ENCODE measurements at regions of chr9 and their contacts with region 1.

Region 1: GRCh38 chr9:125428060-125428901 is 166.7 kb downstream of the GAPVD1 start:
- DNase-seq: peak in 1 of 2 donors; percentile 36
- ATAC-seq: peak in 7 of 8 donors; percentile 16 to 54 (median 47)
- H3K4me3 ChIP-seq: no peak overlapping the region
- H3K27ac ChIP-seq: no peak overlapping the region
- H3K4me1 ChIP-seq: no peaks in the 10 kb centered on the region
- H3K27me3 ChIP-seq: no peaks in the 10 kb centered on the region
- CTCF ChIP-seq: peak in 8 of 9 donors; percentile 15 to 56 (median 50)

Region 2: DNA sequence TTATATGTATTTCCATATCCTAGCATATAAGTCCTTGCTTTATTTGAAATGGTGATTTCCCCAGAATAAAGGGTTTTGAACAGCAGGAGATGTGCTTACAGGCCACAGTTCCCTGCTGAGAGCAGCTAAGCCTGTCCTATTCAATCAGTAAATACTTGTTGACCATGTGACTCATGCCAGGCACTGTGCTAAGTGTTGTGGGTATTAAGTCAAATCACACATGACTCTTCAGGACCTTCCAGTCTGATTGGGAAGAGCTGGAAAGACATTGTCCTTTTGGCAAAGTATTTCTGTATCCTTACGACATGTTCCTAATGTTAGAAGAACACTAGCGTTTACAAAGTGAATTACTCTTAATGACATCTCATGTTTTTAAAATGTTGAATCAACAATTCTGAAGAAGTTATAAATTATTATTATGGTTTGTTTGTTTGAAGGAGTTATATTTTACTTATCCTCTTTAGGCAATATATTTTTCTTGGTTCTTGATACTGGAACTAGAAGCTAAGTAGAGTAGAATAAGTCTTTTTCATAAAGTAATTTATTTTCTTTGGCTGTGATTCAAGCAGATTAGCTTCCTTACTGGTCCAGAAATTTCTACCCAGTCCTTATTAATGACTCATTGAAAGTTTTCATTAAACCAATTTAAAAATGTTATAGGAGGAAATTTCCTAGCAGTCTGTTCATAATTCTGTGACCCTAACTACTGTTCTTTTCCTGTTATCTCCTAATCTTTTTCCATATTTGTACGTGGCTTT is 84.6 kb before region 1 on chr9:
- intact Hi-C with region 1: no loop called
- DNase-seq: peak in 1 of 2 donors; percentile 9
- ATAC-seq: peak; percentile 53 to 97 (median 77)
- H3K4me3 ChIP-seq: no peak overlapping the region
- H3K27ac ChIP-seq: peak overlapping the region in 5 of 10 donors; percentile 2 to 20 (median 10)
- H3K4me1 ChIP-seq: peaks cover 0 to 16% (median 11%) of the 10 kb centered on the region in 9 donors
- H3K27me3 ChIP-seq: no peaks in the 10 kb centered on the region
- CTCF ChIP-seq: peak in 1 of 9 donors; percentile 7

Region 3: GRCh38 chr9:125631391-125632085 is 203.3 kb after region 1 on chr9:
- intact Hi-C with region 1: loop called in 3 of 10 experiments (anchors 5 to 10 kb)
- DNase-seq: no peak
- ATAC-seq: peak; percentile 42 to 77 (median 68)
- H3K4me3 ChIP-seq: no peak overlapping the region
- H3K27ac ChIP-seq: peak overlapping the region in 1 of 10 donors; percentile 80
- H3K4me1 ChIP-seq: peaks cover 0 to 80% (median 31%) of the 10 kb centered on the region in 9 donors
- H3K27me3 ChIP-seq: no peaks in the 10 kb centered on the region
- CTCF ChIP-seq: peak; percentile 23 to 74 (median 63)